Breast epithelium (tissue), 4 donors: ENCODE measurements at regions of chr20 and their contacts with region 1.

Region 1: DNA sequence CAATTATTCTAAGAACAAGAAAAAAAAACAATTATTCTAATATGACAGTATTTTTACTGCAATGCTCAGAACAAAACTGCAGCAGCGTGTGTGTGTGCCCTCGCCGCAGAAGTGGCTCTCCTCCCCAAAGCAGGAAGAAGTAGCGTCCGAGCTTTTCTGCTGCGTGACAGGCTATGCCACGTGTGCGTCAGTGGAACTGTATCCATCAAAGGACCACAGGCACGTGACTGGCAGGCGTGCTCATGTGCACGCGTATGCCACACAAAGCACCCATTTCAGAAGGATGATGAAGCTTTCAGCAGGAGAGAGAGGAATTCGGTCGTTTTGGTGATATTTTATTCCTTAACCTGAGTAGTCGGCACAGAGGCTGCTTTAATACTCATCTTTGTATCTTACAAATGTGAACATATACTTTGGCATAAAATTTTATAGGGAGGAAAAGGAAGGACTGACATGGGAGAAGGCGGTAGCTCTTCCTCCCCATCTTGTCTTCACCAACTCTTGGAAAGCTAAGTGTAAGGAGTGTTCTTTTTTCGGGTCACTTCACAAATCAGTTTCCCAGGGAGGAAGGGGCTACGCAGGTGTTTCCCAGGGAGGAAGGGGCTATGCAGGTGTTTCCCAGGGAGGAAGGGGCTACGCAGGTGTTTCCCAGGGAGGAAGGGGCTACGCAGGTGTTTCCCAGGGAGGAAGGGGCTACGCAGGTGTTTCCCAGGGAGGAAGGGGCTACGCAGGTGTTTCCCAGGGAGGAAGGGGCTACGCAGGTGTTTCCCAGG is 3.4 kb downstream of the TCFL5 start:
- DNase-seq: no peak
- H3K4me3 ChIP-seq: no peak overlapping the region
- H3K27ac ChIP-seq: no peak overlapping the region
- H3K4me1 ChIP-seq: no peaks in the 10 kb centered on the region
- H3K27me3 ChIP-seq: no peaks in the 10 kb centered on the region
- CTCF ChIP-seq: no peak
- POLR2A ChIP-seq: no peak

Region 2: DNA sequence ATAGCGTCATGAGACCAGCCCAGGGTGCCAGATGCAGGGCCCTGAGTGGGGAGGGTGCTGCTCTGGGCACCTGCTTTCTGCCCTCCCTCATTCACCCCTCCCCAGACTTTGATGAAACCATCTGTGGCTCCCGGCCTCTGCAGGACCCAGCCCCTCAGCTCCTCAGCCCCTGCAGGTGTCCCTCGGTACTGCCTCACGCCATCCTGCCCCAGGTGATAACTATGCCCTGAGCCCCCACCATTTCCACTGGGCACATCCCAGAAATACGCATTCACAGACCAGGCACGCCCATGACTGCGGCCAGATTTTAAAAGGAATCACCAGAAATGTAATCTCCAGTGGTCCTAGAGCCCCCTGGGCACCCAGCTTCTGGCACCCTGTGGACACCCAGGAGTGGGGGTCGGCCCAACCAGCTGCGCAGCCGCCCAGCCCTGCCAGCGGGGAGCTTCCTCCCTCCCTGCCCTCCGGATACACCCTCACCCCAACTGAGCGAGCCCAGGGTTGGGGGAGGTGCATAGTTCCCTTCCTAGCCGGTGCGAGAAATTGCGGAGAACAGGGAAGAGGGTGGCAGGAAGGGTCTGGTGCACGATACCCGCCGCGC is 150.2 kb before region 1 on chr20:
- intact Hi-C with region 1: no loop called
- DNase-seq: no peak
- H3K4me3 ChIP-seq: peak overlapping the region in 1 of 3 donors; percentile 19
- H3K27ac ChIP-seq: no peak overlapping the region
- H3K4me1 ChIP-seq: peaks cover 0 to 4% of the 10 kb centered on the region in 2 donors
- H3K27me3 ChIP-seq: peaks cover 4 to 64% of the 10 kb centered on the region in 2 donors
- CTCF ChIP-seq: no peak
- POLR2A ChIP-seq: no peak

Region 3: GRCh38 chr20:62834967-62835730 is 23.1 kb before region 1 on chr20:
- intact Hi-C with region 1: loop called (anchors 1 kb)
- DNase-seq: no peak
- H3K4me3 ChIP-seq: no peak overlapping the region
- H3K27ac ChIP-seq: no peak overlapping the region
- H3K4me1 ChIP-seq: peaks cover 7 to 9% of the 10 kb centered on the region in 2 donors
- H3K27me3 ChIP-seq: no peaks in the 10 kb centered on the region
- CTCF ChIP-seq: no peak
- POLR2A ChIP-seq: no peak

Region 4: GRCh38 chr20:63508072-63508768 is 650.0 kb after region 1 on chr20:
- intact Hi-C with region 1: no loop called
- DNase-seq: no peak
- H3K4me3 ChIP-seq: no peak overlapping the region
- H3K27ac ChIP-seq: no peak overlapping the region
- H3K4me1 ChIP-seq: no peaks in the 10 kb centered on the region
- H3K27me3 ChIP-seq: peaks cover 0 to 38% of the 10 kb centered on the region in 2 donors
- CTCF ChIP-seq: no peak
- POLR2A ChIP-seq: no peak